Activated CD4-positive, alpha-beta T cell treated with anti-CD3 and anti-CD28 coated beads, Interleukin-2, amount 10 ng/mL, durations not matched to agents 24 days and 14 days (primary cell): ENCODE measurements at regions of chr20 and their contacts with region 1.

Region 1: GRCh38 chr20:8043687-8044282 is 24.2 kb upstream of the TMX4 start:
- DNase-seq: peak; percentile 80
- H3K4me3 Mint-ChIP-seq: no peak overlapping the region
- H3K27ac Mint-ChIP-seq: no peak overlapping the region
- H3K4me1 Mint-ChIP-seq: peaks cover 2% of the 10 kb centered on the region
- H3K27me3 Mint-ChIP-seq: peaks cover 24% of the 10 kb centered on the region

Region 2: DNA sequence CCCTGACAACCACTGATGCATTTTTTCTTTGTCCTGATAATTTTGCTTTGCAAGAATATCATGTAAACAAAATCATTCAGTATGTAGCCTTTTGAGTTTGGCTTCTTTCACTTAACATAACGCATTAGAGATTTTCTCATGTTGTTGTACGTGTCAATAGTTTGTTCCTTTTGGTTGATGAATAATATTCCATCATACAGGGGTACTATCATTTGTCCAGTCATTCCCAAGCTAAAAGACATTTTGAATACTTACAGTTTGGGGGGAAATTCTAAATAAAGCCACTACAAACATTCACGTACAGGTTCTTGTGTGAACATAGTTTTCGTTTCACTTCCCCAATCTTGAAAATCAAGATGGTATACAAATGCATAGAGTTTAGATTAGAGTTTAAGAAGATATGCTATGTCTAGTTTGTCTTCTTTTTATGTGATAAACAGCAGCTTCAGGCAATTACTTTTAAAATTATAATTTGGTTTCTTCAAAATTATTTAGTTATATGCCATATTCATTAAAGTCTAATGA is 108.7 kb before region 1 on chr20:
- intact Hi-C with region 1: loop called (anchors 5 kb)
- DNase-seq: no peak
- H3K4me3 Mint-ChIP-seq: no peak overlapping the region
- H3K27ac Mint-ChIP-seq: no peak overlapping the region
- H3K4me1 Mint-ChIP-seq: no peaks in the 10 kb centered on the region
- H3K27me3 Mint-ChIP-seq: peaks cover 5% of the 10 kb centered on the region

Region 3: GRCh38 chr20:8305449-8305978 is 261.7 kb after region 1 on chr20:
- intact Hi-C with region 1: loop called (anchors 5 kb)
- DNase-seq: peak; percentile 90
- H3K4me3 Mint-ChIP-seq: no peak overlapping the region
- H3K27ac Mint-ChIP-seq: no peak overlapping the region
- H3K4me1 Mint-ChIP-seq: no peaks in the 10 kb centered on the region
- H3K27me3 Mint-ChIP-seq: peaks cover 2% of the 10 kb centered on the region

Region 4: DNA sequence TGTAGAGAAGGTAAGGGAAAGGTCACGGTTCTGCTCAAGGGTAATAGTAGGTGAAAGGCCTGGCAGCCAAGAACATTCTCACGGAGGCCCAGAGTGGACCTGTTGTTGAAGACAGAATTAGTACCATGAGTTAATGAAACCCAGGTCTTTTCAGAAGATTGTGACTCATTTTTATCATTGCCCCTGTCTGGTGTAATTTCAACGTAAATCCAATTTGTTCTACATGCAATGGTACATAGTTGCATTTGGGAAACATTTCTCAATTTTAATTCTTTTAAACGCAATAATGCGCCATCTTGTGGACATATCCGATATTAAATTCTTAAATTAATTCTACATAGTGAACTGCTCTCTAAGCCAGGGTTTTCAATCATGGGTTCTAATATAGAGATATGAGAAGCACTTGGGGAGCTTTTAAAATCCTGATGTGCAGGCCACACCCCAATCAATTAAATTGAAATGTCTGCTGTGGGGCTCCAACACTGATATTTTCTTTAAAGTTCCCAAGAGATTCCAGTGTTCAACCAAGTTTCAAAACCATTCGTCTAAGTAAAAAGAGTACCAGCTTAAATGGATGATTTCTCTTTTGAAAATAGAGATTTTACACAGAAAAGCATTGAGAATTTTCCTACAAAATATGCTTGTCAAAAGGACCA is 345.7 kb after region 1 on chr20:
- intact Hi-C with region 1: loop called (anchors 1 kb)
- DNase-seq: no peak
- H3K4me3 Mint-ChIP-seq: no peak overlapping the region
- H3K27ac Mint-ChIP-seq: no peak overlapping the region
- H3K4me1 Mint-ChIP-seq: peaks cover 4% of the 10 kb centered on the region
- H3K27me3 Mint-ChIP-seq: no peaks in the 10 kb centered on the region